ENCODE measurements at regions of chr1 and their contacts with region 1.

Region 1: DNA sequence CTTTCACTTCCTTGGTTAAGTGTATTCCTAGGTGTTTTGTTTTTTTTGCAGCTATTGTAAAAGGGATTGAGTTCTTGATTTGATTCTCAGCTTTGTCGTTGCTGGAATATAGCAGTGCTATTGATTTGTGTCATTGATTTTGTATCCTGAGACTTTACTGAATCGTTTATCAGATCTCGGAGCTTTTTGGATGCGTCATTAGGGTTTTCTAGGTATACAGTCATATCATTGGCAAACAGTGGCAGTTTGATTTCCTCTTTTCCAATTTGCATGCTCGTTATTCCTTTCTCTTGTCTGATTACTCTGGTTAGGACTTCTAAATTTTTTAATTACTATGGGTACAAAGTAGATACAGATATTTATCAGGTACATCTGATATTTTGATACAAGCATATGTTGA is 75.4 kb downstream of the SLC35A3 start:
- DNase-seq: no peak
- H3K4me3 ChIP-seq: no peak overlapping the region
- H3K27ac ChIP-seq: no peak overlapping the region
- H3K4me1 ChIP-seq: peaks cover 0 to 9% of the 10 kb centered on the region in 2 donors
- H3K27me3 ChIP-seq: no peaks in the 10 kb centered on the region
- CTCF ChIP-seq: no peak

Region 2: DNA sequence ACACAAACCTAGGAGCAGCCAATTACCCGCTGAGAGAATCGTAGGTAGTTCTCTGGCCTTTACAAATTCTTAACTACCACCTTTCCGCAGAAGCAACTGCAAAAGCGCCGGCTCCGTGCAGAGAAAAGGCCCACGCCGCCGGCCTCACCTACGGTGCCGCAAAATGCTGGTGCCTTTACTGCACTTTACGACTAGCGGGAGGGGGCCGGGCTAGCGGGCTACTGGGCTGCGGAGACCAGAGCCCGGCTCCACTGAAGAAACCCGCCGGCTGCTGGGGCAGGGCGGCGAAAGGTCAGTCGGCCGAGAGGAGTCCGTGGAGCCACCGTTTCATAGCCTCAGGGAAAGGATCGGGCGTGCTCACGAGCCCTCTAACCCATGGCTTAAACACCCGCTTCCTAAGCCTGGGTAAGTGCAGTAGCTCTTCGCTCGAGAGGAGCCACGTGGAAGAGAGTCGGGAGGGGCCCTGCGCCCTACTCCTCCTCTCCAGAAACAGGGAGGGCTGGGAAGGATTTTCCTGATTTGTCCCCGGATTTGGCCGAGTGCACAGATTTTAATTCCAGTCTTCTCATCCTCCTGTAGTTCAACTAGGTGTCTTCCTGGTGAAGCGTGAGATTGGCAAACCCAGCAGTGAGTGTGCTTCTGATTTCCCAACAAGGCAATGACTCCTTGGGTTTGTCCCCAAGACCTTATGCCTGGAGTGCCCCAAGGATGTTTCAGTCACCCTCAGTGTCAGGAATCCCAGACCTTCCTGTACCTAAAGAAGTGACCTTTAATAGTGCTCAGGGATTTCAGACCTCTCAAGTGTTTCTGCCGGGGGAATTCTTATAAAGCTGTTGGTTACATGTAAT is 980.7 kb after region 1 on chr1 and contains the start of gene DPH5:
- intact Hi-C with region 1: loop called (anchors 10 kb)
- DNase-seq: peak; percentile 45 to 94
- H3K4me3 ChIP-seq: peak within 1 kb of the TSS; percentile 76 to 82
- H3K27ac ChIP-seq: peak within 1 kb of the TSS; percentile 73 to 80
- H3K4me1 ChIP-seq: peaks cover 0 to 11% of the 10 kb centered on the region in 2 donors
- H3K27me3 ChIP-seq: no peaks in the 10 kb centered on the region
- CTCF ChIP-seq: peak in 1 of 3 experiments; percentile 4
- total RNA-seq, gene DPH5: 1.1 TPM